ENCODE measurements at regions of chr2 and their contacts with region 1.

Region 1: GRCh38 chr2:221573430-221574230 is 1.5 kb upstream of the EPHA4 start:
- DNase-seq: peak; percentile 91
- H3K4me3 ChIP-seq: peak overlapping the region; percentile 50 to 74
- H3K27ac ChIP-seq: no peak overlapping the region
- H3K4me1 ChIP-seq: peaks cover 0 to 10% of the 10 kb centered on the region in 2 experiments; a peak in 1 of 4 replicates
- H3K27me3 ChIP-seq: peaks cover 58% of the 10 kb centered on the region
- CTCF ChIP-seq: peak; percentile 88
- EP300 ChIP-seq: no peak
- RAD21 ChIP-seq: peak; percentile 87

Region 2: DNA sequence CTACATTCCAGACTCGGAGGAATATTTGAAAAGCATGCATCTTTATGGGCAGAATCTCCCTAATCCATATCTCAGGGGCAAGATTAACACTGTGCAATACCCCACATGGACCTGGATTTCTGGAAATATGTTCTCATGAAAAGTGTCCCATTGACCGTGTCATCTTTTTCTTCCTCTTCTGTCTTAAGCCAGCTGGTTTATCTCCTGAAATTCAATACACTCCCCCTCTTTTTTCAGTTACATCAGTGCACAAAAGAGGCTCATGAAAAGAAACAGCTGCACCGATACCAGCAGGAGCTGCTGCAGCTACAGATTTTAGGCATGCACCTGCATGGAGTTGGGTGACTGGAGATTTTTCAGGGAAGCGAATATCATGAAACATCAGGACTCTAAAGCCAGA is 1829.0 kb before region 1 on chr2:
- CTCF ChIA-PET with region 1: interaction called, 20 read pairs
- POLR2A ChIA-PET with region 1: no interaction called
- DNase-seq: no peak
- H3K4me3 ChIP-seq: no peak overlapping the region
- H3K27ac ChIP-seq: no peak overlapping the region
- H3K4me1 ChIP-seq: no peaks in the 10 kb centered on the region
- H3K27me3 ChIP-seq: peaks cover 18% of the 10 kb centered on the region; the same call in 1 of the 2 replicates
- CTCF ChIP-seq: no peak
- EP300 ChIP-seq: no peak
- RAD21 ChIP-seq: no peak

Region 3: GRCh38 chr2:220695397-220696279 is 878.0 kb before region 1 on chr2:
- CTCF ChIA-PET with region 1: interaction called, 18 read pairs
- POLR2A ChIA-PET with region 1: no interaction called
- DNase-seq: no peak
- H3K4me3 ChIP-seq: no peak overlapping the region
- H3K27ac ChIP-seq: no peak overlapping the region
- H3K4me1 ChIP-seq: no peaks in the 10 kb centered on the region
- H3K27me3 ChIP-seq: no peaks in the 10 kb centered on the region
- CTCF ChIP-seq: no peak
- EP300 ChIP-seq: no peak
- RAD21 ChIP-seq: no peak

Region 4: GRCh38 chr2:221562226-221562625 is 11.4 kb before region 1 on chr2:
- CTCF ChIA-PET with region 1: interaction called, 26 read pairs
- POLR2A ChIA-PET with region 1: no interaction called
- DNase-seq: no peak
- H3K4me3 ChIP-seq: no peak overlapping the region
- H3K27ac ChIP-seq: no peak overlapping the region
- H3K4me1 ChIP-seq: no peaks in the 10 kb centered on the region
- H3K27me3 ChIP-seq: no peaks in the 10 kb centered on the region
- CTCF ChIP-seq: no peak
- EP300 ChIP-seq: no peak
- RAD21 ChIP-seq: no peak

Region 5: DNA sequence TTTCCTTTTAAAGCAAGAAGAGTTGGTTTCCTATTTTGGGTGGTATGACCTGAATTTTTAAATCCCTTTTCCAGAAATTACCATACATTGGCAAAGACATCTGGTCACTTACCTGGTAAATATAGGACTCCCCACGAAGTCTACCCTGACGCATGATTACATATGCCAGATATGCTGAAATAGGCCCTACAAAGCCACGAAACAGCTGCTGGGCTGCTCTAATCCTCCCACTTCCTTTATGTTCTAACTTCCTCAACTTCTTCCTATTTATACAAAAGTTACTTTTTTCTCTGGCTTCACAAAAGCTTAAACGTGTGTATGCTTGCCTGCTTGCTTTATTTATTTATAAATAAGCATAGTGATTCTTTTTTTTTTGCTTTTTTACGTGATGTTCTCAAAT is 184.4 kb after region 1 on chr2:
- CTCF ChIA-PET with region 1: no interaction called
- POLR2A ChIA-PET with region 1: no interaction called
- DNase-seq: no peak
- H3K4me3 ChIP-seq: no peak overlapping the region
- H3K27ac ChIP-seq: no peak overlapping the region
- H3K4me1 ChIP-seq: no peaks in the 10 kb centered on the region
- H3K27me3 ChIP-seq: no peaks in the 10 kb centered on the region
- CTCF ChIP-seq: no peak
- EP300 ChIP-seq: no peak
- RAD21 ChIP-seq: no peak

Region 6: DNA sequence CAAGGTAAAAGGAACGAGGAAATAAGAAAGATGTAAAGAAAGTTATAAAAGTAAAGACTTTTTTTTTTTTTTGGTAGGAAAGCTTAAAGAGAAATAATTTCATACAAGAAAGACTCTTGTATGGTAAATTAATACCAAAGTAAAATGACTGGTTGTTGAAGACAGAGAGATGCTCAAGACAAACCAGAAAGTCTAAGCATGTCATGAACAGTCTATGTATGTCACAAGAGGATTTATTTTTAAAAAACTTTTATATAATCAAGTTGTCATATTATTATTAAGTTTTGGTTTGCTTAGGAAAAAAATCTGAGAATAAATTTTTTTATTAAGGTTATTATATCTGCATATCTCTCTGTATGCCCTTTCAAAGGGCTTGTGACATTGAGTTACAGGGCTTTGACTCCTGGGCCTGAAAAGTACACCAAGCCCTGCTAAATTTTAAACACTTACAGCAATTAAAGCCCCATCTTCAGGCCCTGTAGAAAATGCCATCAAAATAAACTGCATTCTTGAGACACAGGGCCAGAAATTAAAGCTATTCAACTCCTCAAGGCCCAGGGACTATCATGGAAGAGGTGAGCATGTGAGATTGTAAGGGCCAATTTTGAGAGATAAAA is 839.8 kb after region 1 on chr2:
- CTCF ChIA-PET with region 1: no interaction called
- POLR2A ChIA-PET with region 1: no interaction called
- DNase-seq: no peak
- H3K4me3 ChIP-seq: no peak overlapping the region; a peak in 1 of 4 replicates
- H3K27ac ChIP-seq: no peak overlapping the region
- H3K4me1 ChIP-seq: no peaks in the 10 kb centered on the region
- H3K27me3 ChIP-seq: no peaks in the 10 kb centered on the region
- CTCF ChIP-seq: no peak
- EP300 ChIP-seq: no peak
- RAD21 ChIP-seq: no peak